ENCODE measurements at regions of chr2 and their contacts with region 1.

Region 1: DNA sequence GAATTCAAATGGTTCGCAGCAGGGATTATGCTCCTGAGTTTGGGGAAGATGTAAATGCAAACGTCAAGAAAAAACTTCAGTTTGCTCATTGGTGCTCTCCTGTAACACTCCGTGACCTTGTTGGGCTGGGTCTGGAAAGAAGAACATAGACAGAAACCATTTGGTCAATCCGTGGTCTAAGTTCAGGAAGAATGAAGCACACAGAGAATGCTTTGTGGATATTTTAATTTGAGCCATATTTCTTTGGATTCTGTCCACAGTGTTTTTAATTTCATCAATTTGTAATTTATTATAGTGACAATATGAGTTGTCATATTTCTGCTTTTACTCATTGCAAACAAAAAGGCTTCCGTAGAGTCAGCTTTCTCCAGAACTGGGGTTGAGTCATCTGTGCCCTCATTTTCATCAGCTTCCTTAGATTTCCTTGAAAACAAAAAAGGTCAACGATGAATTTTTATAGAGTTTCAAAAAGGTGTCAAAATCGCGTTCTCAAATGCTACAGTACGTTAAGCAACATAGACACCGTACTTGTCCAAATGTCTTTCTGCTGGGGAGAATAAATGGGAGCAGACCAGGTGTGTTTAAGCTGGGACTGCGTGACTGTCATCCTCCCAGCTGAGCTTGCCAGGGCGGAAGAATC is 606.4 kb downstream of the RNF144A start:
- DNase-seq: peak; percentile 82
- H3K4me3 ChIP-seq: peak overlapping the region; percentile 38
- H3K27ac ChIP-seq: peak overlapping the region; percentile 28
- H3K4me1 ChIP-seq: peaks cover 23% of the 10 kb centered on the region
- H3K27me3 ChIP-seq: no peaks in the 10 kb centered on the region

Region 2: GRCh38 chr2:7392076-7392787 is 131.4 kb before region 1 on chr2:
- in situ Hi-C with region 1: no loop called
- DNase-seq: peak; percentile 50
- H3K4me3 ChIP-seq: no peak overlapping the region
- H3K27ac ChIP-seq: no peak overlapping the region
- H3K4me1 ChIP-seq: no peaks in the 10 kb centered on the region
- H3K27me3 ChIP-seq: 0 out of 2 replicates have a peak, but pooled peaks cover 3% of the 10 kb centered on the region

Region 3: GRCh38 chr2:7835693-7836680 is 312.4 kb after region 1 on chr2:
- in situ Hi-C with region 1: loop called (anchors 10 kb)
- DNase-seq: no peak
- H3K4me3 ChIP-seq: no peak overlapping the region
- H3K27ac ChIP-seq: no peak overlapping the region
- H3K4me1 ChIP-seq: no peaks in the 10 kb centered on the region
- H3K27me3 ChIP-seq: no peaks in the 10 kb centered on the region